ENCODE measurements at regions of chr5 and their contacts with region 1.

Region 1: GRCh38 chr5:73266925-73267765 is 94.2 kb downstream of the TMEM174 start:
- DNase-seq: no peak
- H3K4me3 ChIP-seq: no peak overlapping the region
- H3K27ac ChIP-seq: no peak overlapping the region
- H3K4me1 ChIP-seq: no peaks in the 10 kb centered on the region
- H3K27me3 ChIP-seq: no peaks in the 10 kb centered on the region
- CTCF ChIP-seq: no peak
- POLR2A ChIP-seq: no peak

Region 2: GRCh38 chr5:73307645-73308355 is 40.7 kb after region 1 on chr5:
- intact Hi-C with region 1: loop called (anchors 2 kb)
- DNase-seq: no peak
- H3K4me3 ChIP-seq: no peak overlapping the region
- H3K27ac ChIP-seq: no peak overlapping the region
- H3K4me1 ChIP-seq: no peaks in the 10 kb centered on the region
- H3K27me3 ChIP-seq: peaks cover 3 to 26% of the 10 kb centered on the region in 2 donors
- CTCF ChIP-seq: no peak
- POLR2A ChIP-seq: no peak

Measured in breast epithelium (tissue), 4 donors.